Activated T-helper 1 cell treated with anti-CD3 and anti-CD28 coated beads, Interleukin-12 subunit alpha, Interleukin-12 subunit beta, Interleukin-2, Interleukin-4 antibody, amounts not matched to agents 30 ng/mL and 10 ng/mL and 1 ng/mL, durations not matched to agents 14 hours and 24 hours and 36 hours (primary cell): ENCODE measurements at regions of chr12 and their contacts with region 1.

Region 1: GRCh38 chr12:28253161-28253641 is 62.9 kb downstream of the CCDC91 start:
- DNase-seq: peak; percentile 18
- H3K4me3 Mint-ChIP-seq: peak overlapping the region; percentile 74
- H3K27ac Mint-ChIP-seq: peak overlapping the region; percentile 97
- H3K4me1 Mint-ChIP-seq: peaks cover 48% of the 10 kb centered on the region
- H3K27me3 Mint-ChIP-seq: no peaks in the 10 kb centered on the region

Region 2: GRCh38 chr12:26691234-26691970 is 1561.8 kb before region 1 on chr12:
- intact Hi-C with region 1: no loop called
- DNase-seq: no peak
- H3K4me3 Mint-ChIP-seq: no peak overlapping the region
- H3K27ac Mint-ChIP-seq: no peak overlapping the region
- H3K4me1 Mint-ChIP-seq: no peaks in the 10 kb centered on the region
- H3K27me3 Mint-ChIP-seq: peaks cover 2% of the 10 kb centered on the region

Region 3: DNA sequence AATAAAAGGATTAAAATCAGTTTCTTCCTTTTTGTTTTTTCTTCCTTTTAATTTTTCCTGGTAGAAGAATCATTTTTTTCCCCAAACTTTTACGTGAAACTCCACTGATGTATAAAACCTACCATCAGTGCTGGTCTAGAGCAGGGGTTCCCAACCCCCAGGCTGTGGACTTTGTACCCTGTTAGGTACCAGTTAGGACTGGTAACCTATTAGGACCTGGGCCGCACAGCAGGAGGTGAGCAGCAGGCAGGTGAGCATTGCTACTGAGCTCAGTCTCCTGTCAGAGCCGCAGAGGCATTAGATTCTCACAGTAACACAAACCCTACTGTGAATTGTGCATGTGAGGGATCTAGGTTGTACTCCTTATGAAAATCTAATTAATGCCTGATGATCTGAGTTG is 796.6 kb before region 1 on chr12:
- intact Hi-C with region 1: loop called (anchors 5 kb)
- DNase-seq: no peak
- H3K4me3 Mint-ChIP-seq: no peak overlapping the region
- H3K27ac Mint-ChIP-seq: no peak overlapping the region
- H3K4me1 Mint-ChIP-seq: peaks cover 35% of the 10 kb centered on the region
- H3K27me3 Mint-ChIP-seq: peaks cover 4% of the 10 kb centered on the region

Region 4: DNA sequence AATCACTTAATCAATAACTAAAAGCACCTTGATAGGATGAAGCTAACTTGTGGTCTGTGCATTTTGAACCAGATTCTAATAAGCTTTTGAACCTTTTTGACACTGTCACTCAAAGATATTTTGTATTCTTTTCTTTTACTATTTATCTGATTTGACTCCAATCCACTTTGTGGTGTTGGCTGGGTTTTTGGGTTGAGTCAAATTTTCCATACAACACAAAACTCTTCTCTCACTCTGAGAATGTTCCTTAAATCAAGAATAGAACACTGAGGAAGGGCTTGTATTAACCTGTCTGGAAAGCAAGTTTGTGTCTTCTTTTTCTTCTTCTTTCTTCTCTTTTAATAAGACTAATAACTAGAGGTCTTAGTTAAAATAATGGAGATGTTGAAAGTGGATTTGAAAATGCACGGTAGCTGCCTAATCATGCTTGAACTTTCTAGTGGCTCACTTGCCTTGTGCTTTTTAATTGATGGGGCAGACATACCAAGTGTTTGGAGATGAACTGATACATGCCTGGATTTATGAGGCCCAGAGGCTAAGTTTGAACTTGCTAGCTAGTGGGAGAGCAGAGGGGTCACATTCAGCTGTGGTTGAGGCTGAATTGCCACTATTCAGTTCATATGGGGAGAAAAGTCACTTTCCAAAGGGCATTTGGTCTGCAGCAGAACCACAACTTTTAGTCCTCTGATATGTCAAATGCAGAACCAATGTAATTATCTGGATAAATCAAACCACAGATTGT is 187.1 kb before region 1 on chr12:
- intact Hi-C with region 1: loop called (anchors 1 kb)
- DNase-seq: no peak
- H3K4me3 Mint-ChIP-seq: no peak overlapping the region
- H3K27ac Mint-ChIP-seq: no peak overlapping the region
- H3K4me1 Mint-ChIP-seq: peaks cover 17% of the 10 kb centered on the region
- H3K27me3 Mint-ChIP-seq: peaks cover 6% of the 10 kb centered on the region

Region 5: DNA sequence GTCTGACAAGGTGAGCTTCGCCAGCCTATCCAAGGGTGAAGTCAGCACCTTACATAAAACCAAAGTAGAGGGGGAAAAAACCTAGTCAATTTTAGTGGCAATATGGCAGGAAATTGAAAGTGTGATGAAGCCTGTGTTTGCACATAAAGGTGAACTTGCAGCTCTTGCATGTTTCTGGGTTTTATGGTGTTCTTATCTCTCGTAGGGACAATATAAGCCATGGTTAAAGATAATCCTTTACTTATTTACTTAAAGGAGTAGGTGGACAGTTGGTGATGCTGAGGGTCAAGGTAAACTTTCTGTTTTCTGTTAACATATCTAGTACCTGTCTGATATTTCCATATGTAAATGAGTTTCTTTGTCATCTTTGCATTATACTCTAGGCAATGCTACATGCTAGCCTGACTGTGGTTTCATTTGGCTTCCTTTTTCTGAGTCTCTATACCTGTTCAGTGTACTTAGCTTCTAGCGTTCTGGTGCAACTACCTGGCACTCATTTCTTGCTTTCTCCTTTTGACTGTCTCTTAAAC is 30.1 kb before region 1 on chr12:
- intact Hi-C with region 1: loop called (anchors 1 kb)
- DNase-seq: no peak
- H3K4me3 Mint-ChIP-seq: peak overlapping the region; percentile 9
- H3K27ac Mint-ChIP-seq: peak overlapping the region; percentile 27
- H3K4me1 Mint-ChIP-seq: peaks cover 40% of the 10 kb centered on the region
- H3K27me3 Mint-ChIP-seq: peaks cover 3% of the 10 kb centered on the region

Region 6: DNA sequence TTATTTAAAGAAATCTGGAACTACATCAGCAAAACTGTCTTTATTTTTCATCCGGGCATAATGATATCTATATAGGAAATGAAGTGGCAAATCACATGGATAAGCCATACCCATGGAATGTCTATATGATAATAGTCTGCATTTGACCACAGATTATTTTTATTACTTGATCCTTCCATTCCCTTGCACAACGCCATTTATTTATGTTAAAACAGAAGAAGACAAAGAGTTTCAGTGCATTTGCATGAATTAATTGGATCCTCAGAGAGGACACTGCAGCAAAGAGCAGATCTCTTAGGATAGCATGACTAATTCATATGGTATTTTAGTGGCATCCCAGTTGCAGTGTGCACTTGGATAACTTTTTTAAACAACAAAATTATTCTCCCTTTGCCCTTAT is 282.0 kb after region 1 on chr12:
- intact Hi-C with region 1: loop called (anchors 1 kb)
- DNase-seq: no peak
- H3K4me3 Mint-ChIP-seq: no peak overlapping the region
- H3K27ac Mint-ChIP-seq: no peak overlapping the region
- H3K4me1 Mint-ChIP-seq: peaks cover 6% of the 10 kb centered on the region
- H3K27me3 Mint-ChIP-seq: no peaks in the 10 kb centered on the region